ENCODE measurements at regions of chr2 and their contacts with region 1.

Region 1: DNA sequence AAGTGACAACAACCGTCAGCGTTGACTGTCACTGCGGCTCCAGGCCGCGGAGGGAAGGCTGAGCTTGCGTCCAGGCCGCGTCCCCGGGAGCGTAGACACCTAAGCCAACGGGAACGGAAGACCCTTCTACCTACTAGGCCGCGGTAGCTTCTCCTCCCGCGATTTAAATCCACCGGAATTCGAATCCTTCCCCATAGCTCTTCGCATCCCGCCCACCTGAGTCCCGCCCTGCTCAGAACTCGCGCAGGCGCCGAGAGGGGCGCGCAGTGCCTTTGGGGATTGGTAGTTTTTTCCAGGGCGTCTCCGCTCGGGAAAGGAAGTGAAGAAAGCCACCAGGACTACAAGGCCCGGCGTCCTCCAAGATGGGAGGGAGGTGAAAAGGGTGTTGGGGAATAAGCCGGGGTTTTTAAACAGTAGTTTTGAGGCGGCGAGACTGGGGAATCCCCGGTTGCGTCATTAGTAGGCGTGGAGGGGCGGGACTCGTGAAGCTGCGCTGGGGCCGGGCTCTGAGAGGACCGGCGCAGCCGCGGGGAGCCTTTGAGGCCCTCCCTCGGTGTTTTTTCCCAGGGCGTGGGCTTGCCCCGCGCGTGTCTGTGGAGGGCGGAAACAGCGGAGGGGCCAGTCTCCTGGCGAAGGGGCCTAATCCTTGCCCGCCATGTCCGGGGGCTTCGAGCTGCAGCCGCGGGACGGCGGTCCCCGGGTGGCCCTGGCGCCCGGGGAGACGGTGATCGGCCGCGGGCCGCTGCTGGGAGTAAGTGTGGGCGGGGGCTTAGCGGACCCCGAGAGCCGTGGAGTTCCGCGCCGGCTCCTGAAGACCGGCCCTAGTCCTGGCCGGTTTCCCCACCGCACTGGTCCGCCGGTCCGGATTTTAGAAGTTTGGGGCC is at the starts of genes APLF and FBXO48:
- DNase-seq: peak; percentile 90 to 98 (median 97)
- H3K4me3 ChIP-seq: peak within 1 kb of the TSS; percentile 69 to 98 (median 89)
- H3K27ac ChIP-seq: peak within 1 kb of the TSS in 55 of 59 donors; percentile 13 to 92 (median 82)
- H3K27me3 ChIP-seq: no peaks in the 10 kb centered on the region
- CTCF ChIP-seq: peak in 20 of 56 donors; percentile 2 to 42 (median 24)
- total RNA-seq, gene APLF: 4.5 to 15.3 (median 9.1) TPM
- total RNA-seq, gene FBXO48: 1.2 to 3.7 (median 2.4) TPM

Region 2: GRCh38 chr2:68715353-68716041 is 248.2 kb after region 1 on chr2:
- intact Hi-C with region 1: loop called (anchors 2 to 10 kb)
- DNase-seq: peak in 2 of 10 donors; percentile 46 to 48
- H3K4me3 ChIP-seq: no peak overlapping the region
- H3K27ac ChIP-seq: peak overlapping the region in 14 of 59 donors; percentile 5 to 76 (median 28)
- H3K27me3 ChIP-seq: peaks cover 0 to 7% (median 0%) of the 10 kb centered on the region in 45 donors
- CTCF ChIP-seq: peak in 54 of 56 donors; percentile 9 to 76 (median 56)

Region 3: DNA sequence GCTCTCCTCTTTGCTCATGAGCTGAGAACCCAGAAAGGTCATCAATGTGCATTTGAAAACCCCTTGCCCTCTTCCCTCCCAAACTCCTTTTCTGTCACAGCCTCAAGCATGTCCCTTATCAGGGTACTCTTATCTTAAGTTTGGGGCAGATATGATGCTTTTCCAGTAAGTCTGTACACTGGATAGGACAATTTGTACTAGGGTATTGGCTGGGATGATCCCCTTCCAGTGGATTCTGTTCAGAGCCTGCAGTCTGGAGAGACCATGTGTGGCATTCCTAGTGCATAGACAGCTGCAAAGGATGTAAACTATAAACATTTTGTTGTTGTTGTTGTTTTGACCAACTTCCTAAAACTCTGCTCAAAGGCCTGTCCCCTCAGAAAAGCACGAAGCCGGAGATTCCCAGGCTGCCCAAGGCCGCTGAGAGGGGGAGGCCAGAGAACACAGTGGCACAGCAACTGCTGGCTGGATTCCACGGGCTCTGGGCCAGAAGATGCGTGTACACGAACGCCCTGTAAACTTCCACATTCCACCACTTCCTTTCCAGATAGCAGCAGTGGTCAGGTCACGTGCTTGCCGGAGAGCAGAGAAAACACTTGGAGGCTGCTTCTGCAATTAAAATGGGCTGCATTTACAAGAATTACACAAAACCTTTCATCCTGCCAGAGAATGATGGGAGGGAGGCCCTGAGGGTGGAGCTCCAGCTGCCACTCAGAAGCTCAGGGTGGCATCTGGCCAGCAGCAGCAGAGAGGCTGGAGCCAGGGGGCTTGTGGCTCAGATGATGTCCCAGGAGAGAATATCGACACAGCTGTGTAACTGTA is 361.8 kb after region 1 on chr2:
- intact Hi-C with region 1: loop called (anchors 5 to 10 kb)
- DNase-seq: peak; percentile 25 to 94 (median 86)
- H3K4me3 ChIP-seq: peak overlapping the region in 51 of 59 donors; percentile 1 to 60 (median 31)
- H3K27ac ChIP-seq: peak overlapping the region; percentile 28 to 93 (median 85)
- H3K27me3 ChIP-seq: no peaks in the 10 kb centered on the region
- CTCF ChIP-seq: peak in 24 of 56 donors; percentile 8 to 40 (median 20)

Measured in dorsolateral prefrontal cortex (tissue), 120 donors.